AG04450 (cell line): ENCODE measurements at regions of chr10 and their contacts with region 1.

Region 1: DNA sequence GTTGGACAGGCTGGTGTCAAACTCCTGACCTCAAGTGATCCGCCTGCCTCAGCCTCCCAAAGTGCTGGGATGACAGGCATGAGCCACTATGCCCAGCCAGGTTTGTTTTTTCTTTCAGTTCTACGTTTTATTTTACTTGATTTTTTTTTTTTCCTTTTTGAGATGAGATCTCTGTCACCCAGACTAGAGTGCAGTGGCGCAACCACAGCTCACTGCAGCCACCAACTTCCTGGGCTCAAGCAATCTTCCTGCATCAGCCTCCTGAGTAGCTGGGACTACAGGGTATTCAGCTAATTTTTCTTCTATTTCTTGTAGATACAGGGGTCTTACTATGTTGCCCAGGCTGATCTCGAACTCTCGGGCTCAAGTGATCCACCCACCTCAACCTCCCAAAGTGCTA is 24.3 kb downstream of the GDI2 start:
- DNase-seq: no peak
- H3K4me3 ChIP-seq: no peak overlapping the region
- H3K27ac ChIP-seq: no peak overlapping the region
- H3K27me3 ChIP-seq: no peaks in the 10 kb centered on the region
- CTCF ChIP-seq: no peak

Region 2: DNA sequence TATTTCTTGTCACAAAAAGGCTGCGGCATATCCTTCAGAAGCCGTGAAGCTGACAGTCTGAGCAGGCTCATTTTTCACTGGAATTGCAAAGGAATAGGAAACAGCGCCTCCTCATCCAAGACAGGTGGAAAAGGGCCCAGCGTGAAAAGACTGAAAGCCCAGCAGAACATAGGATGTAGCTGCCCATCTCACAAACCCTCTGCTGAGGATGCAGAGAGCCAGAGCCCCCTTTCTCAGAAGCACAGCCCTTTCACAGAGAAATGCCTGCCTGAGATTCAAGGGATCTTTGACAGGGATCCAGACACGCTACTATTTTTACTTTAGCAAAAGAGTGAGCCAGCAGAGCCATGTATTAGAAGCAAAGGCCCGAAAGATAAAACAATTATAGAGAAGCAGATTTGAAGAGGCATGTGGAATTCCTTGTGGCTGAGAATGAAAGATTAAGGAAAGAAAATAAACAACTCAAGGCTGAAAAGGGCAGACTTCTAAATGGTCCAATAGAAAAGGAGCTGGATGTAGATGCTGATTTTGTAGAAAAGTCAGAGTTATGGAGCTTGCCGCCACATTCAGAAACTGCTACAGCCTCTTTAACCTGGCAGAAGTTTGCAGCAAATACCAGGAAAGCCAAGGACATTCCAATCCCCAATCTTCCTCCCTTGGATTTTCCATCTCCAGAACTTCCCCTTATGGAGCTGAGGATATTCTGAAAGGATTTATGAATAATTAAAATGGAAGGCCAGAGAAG is 12.7 kb before region 1 on chr10:
- CTCF ChIA-PET with region 1: no interaction called
- POLR2A ChIA-PET with region 1: interaction called, 10 read pairs
- DNase-seq: no peak
- H3K4me3 ChIP-seq: no peak overlapping the region
- H3K27ac ChIP-seq: peak overlapping the region; percentile 42
- H3K27me3 ChIP-seq: no peaks in the 10 kb centered on the region
- CTCF ChIP-seq: peak; percentile 31

Region 3: DNA sequence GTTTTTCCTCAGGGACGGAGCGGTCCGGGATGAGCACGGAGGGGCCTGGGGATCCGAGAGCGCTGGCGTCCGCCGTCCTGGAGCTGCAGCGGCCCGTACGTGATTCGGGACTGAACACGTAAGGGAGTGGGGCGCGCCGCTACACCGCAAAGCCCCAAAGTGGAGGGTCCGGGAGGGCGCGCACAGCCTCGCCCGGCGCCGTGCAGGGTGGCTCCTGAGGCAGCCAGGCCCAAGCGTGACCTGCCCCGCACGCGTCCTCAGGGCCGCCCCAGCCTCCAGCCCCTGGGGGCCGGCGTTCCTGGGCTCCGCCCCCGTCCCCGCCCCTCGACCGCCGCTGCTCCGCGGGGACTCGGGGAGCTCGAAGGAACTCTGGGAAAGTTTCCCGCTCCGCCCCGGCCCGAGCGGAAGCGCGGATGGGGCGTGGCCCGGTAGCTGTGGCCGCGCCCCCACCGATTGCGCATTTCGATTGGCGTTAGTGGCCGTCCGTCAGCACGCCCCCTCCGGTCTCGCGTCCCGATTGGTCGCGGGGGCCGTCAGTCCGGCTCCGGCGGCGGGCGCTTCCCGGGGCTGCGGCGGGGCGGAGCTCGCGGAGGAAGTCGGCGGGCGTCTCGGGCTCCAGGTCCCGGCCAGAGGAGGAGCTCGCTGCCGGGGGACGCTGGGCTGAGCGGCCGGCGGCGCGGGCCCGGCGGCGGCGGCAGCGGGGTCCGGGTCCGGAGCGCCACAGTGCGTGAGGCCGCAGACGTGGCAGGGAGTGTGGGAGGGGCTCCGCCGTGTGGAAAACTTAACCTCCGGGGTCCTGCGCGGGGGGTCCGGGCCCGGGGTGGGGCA is 100.9 kb after region 1 on chr10 and contains the starts of genes ANKRD16 and FBH1:
- CTCF ChIA-PET with region 1: no interaction called
- POLR2A ChIA-PET with region 1: no interaction called
- DNase-seq: peak; percentile 98
- H3K4me3 ChIP-seq: peak within 1 kb of the TSS; percentile 87
- H3K27ac ChIP-seq: peak within 1 kb of the TSS; percentile 57
- H3K27me3 ChIP-seq: no peaks in the 10 kb centered on the region
- CTCF ChIP-seq: no peak
- polyA plus RNA-seq, gene ANKRD16: 5.9 and 6.7 TPM in 2 replicates
- polyA plus RNA-seq, gene FBH1: 65.2 and 77.5 TPM in 2 replicates

Region 4: GRCh38 chr10:5948999-5949759 is 160.2 kb after region 1 on chr10:
- CTCF ChIA-PET with region 1: no interaction called
- POLR2A ChIA-PET with region 1: no interaction called
- DNase-seq: peak; percentile 36
- H3K4me3 ChIP-seq: no peak overlapping the region
- H3K27ac ChIP-seq: no peak overlapping the region
- H3K27me3 ChIP-seq: no peaks in the 10 kb centered on the region
- CTCF ChIP-seq: peak; percentile 70